ENCODE measurements at regions of chr3 and their contacts with region 1.

Region 1: DNA sequence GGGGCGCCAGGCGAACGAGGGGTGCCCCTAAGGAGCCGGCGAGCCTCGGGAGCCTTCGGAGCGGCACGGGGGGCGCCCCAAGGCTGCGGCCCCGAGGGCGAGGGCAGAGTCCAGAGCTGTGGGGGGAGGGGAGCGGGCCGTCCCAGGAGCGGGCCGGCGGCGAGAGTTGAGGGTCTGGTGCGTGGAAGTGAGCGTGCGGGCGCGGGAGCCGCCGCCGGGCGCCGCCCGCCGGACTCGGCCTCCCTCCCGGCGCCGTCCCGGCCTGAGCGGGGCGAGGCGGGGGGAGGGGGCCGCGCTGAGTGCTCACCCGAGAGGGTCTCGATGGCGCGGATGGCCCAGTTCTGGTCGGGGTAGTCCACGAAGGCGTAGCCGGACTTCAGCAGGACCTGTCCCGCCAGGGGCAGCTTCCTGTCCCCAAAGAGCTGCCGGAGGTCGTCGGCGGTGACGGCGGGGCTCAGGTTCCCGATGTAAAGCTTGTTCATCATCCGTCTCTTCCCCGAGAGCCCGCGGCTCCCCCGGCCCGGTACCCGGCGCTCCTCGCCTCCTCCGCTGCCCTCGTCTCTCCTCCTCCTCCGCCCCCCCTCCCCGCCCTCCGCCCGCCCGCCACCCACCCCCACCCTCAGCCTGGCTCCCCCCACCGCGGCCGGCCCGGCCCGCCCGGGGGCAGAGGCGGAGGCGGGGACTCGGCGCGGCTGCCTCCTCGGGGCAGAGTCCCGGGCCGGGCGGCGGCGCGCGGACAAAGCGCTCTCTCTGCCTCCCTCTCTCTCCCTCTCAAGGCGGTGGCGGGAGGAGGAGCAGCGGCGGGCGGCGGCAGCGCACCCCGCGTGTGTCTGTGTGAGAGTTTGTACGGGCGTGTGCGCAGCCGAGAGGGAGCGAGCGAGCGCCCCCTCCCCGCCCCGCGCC is at the start of gene IGF2BP2:
- DNase-seq: peak; percentile 91
- ATAC-seq: peak; percentile 88
- total RNA-seq, gene IGF2BP2: 15.9 TPM

Region 2: GRCh38 chr3:185460719-185461350 is 363.9 kb before region 1 on chr3:
- intact Hi-C with region 1: no loop called
- DNase-seq: no peak
- ATAC-seq: no peak

Region 3: DNA sequence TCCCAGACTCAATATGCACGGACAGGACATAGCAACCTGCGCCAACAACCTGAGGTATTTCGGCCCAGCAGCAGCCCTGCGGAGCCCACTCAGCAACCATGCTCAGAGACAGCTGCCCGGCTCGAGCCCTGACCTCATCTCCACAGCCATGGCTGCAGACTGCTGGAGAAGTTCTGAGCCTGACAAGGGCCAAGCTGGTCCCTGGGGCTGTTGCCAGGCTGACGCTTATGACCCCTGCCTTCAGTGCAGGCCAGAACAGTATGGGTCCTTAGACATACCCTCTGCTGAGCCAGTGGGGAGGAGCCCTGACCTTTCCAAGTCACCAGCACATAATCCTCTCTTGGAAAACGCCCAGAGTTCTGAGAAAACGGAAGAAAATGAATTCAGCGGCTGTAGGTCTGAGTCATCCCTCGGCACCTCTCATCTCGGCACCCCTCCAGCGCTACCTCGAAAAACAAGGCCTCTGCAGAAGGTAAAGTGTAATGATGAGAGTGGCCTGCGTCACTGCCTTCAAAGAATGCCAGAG is 351.4 kb before region 1 on chr3:
- intact Hi-C with region 1: no loop called
- DNase-seq: no peak
- ATAC-seq: no peak

Region 4: GRCh38 chr3:185572183-185572582 is 252.5 kb before region 1 on chr3:
- intact Hi-C with region 1: no loop called
- DNase-seq: no peak
- ATAC-seq: no peak

Region 5: GRCh38 chr3:185733980-185734724 is 90.6 kb before region 1 on chr3:
- intact Hi-C with region 1: loop called (anchors 10 kb)
- DNase-seq: no peak
- ATAC-seq: peak; percentile 68

Region 6: DNA sequence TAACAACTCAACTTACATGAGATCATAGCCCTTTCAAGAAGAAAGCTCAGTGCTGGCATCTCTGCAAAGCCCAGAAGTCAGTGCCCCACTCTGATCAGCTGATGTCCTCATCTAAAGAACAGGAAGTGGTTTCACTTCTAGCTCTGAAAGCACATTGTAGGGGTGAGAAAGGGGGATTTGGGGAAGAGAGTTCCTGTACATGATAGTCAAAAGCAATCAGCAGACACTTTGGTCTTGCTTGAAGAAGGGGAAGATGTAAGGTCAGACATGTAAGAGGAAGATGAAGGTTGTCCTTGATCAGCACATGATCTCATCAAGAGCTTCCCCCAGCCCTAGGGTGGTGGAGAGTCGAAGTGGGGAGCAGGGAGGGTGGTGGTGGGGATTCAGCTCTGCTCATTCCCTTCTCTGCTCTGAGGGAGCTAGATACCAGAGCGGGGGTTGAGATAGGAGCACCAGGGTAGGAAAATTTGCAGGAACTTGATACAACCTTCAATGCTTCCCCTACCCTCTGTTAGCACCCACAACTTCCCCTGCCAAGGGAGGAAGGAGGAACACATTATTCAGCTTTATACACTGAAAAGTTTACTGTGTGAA is 360.6 kb after region 1 on chr3:
- intact Hi-C with region 1: no loop called
- DNase-seq: no peak
- ATAC-seq: peak; percentile 65